SK-N-SH (cell line): ENCODE measurements at regions of chr4 and their contacts with region 1.

Region 1: GRCh38 chr4:81466841-81467671 is 4.7 kb downstream of the RASGEF1B start:
- DNase-seq: peak; percentile 36
- H3K4me3 ChIP-seq: peak overlapping the region in 1 of 2 experiments; percentile 34; a peak in 1 of 4 replicates
- H3K27ac ChIP-seq: no peak overlapping the region
- H3K4me1 ChIP-seq: no peaks in the 10 kb centered on the region; a peak in 1 of 4 replicates
- H3K27me3 ChIP-seq: peaks cover 37% of the 10 kb centered on the region
- CTCF ChIP-seq: peak; percentile 96
- EP300 ChIP-seq: no peak
- RAD21 ChIP-seq: peak; percentile 83

Region 2: GRCh38 chr4:81454499-81454898 is 12.6 kb before region 1 on chr4:
- CTCF ChIA-PET with region 1: interaction called, 15 read pairs
- POLR2A ChIA-PET with region 1: no interaction called
- DNase-seq: no peak
- H3K4me3 ChIP-seq: no peak overlapping the region
- H3K27ac ChIP-seq: no peak overlapping the region
- H3K4me1 ChIP-seq: no peaks in the 10 kb centered on the region
- H3K27me3 ChIP-seq: no peaks in the 10 kb centered on the region; the same call in 1 of the 2 replicates
- CTCF ChIP-seq: no peak
- EP300 ChIP-seq: no peak
- RAD21 ChIP-seq: no peak

Region 3: DNA sequence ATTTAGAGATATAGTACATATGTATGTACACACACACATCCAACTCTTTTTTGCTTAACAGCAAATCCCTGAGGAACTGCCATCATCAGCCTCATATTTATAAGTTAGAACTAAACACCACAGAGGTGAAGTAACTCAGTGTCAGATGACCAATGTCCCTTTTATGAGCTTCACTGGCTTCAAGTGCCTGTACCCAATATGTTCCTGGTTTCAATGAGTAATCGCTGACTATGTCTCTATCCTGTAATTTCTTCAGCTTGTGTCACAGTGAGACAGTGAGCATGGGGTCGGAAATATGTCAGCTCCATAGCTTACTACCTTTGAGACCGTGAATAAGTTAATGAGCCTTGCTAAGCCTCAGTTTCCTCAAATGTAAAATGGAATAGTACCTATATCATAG is 140.9 kb after region 1 on chr4:
- CTCF ChIA-PET with region 1: no interaction called
- POLR2A ChIA-PET with region 1: no interaction called
- DNase-seq: no peak
- H3K4me3 ChIP-seq: no peak overlapping the region
- H3K27ac ChIP-seq: no peak overlapping the region
- H3K4me1 ChIP-seq: no peaks in the 10 kb centered on the region
- H3K27me3 ChIP-seq: no peaks in the 10 kb centered on the region
- CTCF ChIP-seq: no peak
- EP300 ChIP-seq: no peak
- RAD21 ChIP-seq: no peak

Region 4: GRCh38 chr4:81844717-81845116 is 377.7 kb after region 1 on chr4:
- CTCF ChIA-PET with region 1: interaction called, 57 read pairs
- POLR2A ChIA-PET with region 1: no interaction called
- DNase-seq: peak; percentile 42
- H3K4me3 ChIP-seq: no peak overlapping the region
- H3K27ac ChIP-seq: no peak overlapping the region
- H3K4me1 ChIP-seq: no peaks in the 10 kb centered on the region
- H3K27me3 ChIP-seq: peaks cover 6% of the 10 kb centered on the region; the same call in 1 of the 2 replicates
- CTCF ChIP-seq: peak; percentile 73
- EP300 ChIP-seq: no peak
- RAD21 ChIP-seq: peak; percentile 73

Region 5: DNA sequence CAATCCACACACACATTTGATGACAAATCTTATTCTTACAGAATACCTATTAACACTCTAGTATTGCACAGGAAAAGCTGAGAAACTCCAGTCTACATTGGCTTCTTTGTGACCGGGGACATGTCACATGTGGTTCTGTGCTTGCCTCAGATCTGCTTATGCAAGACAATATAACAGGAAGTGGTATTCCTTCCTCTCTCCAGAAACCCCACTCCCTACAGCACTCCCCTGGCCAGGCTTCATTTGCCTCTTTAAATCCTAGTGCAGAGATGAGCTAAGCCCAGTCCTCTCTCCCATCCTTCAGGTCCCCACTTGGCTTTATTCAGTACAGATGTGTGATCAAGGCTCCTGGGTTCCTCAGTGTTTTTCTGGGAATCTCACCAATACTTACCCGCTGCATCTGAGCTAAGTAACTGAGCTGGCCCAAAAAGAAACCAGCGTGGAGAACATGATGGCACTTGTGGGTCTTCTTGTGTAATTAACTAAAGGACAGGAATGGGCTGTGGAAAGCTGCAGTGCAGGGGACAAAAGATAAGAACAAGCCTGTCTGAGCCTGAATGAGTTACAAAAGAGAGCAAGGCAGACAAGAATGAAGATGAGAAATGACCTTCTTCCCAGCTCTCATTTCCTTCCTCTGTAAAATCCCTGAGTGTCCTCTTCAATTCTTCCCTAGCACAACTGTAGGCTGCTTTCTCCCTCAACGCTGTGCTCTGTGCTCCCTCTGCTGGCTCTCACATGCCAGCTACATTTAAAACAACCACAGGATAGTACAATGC is 801.2 kb after region 1 on chr4:
- CTCF ChIA-PET with region 1: interaction called, 10 read pairs
- POLR2A ChIA-PET with region 1: no interaction called
- DNase-seq: peak; percentile 57
- H3K4me3 ChIP-seq: no peak overlapping the region; a peak in 1 of 4 replicates
- H3K27ac ChIP-seq: no peak overlapping the region
- H3K4me1 ChIP-seq: no peaks in the 10 kb centered on the region
- H3K27me3 ChIP-seq: peaks cover 33% of the 10 kb centered on the region; the same call in 1 of the 2 replicates
- CTCF ChIP-seq: peak; percentile 73
- EP300 ChIP-seq: no peak
- RAD21 ChIP-seq: peak; percentile 78